ENCODE measurements at regions of chr1 and their contacts with region 1.

Region 1: GRCh38 chr1:179121159-179121938 is 39.5 kb downstream of the TOR3A start:
- DNase-seq: peak; percentile 83
- H3K4me3 Mint-ChIP-seq: no peak overlapping the region
- H3K27ac Mint-ChIP-seq: no peak overlapping the region
- H3K4me1 Mint-ChIP-seq: peaks cover 6% of the 10 kb centered on the region
- H3K27me3 Mint-ChIP-seq: no peaks in the 10 kb centered on the region

Region 2: GRCh38 chr1:179194068-179194537 is 72.8 kb after region 1 on chr1:
- intact Hi-C with region 1: loop called (anchors 1 kb)
- DNase-seq: no peak
- H3K4me3 Mint-ChIP-seq: no peak overlapping the region
- H3K27ac Mint-ChIP-seq: no peak overlapping the region
- H3K4me1 Mint-ChIP-seq: peaks cover 16% of the 10 kb centered on the region
- H3K27me3 Mint-ChIP-seq: no peaks in the 10 kb centered on the region

Region 3: DNA sequence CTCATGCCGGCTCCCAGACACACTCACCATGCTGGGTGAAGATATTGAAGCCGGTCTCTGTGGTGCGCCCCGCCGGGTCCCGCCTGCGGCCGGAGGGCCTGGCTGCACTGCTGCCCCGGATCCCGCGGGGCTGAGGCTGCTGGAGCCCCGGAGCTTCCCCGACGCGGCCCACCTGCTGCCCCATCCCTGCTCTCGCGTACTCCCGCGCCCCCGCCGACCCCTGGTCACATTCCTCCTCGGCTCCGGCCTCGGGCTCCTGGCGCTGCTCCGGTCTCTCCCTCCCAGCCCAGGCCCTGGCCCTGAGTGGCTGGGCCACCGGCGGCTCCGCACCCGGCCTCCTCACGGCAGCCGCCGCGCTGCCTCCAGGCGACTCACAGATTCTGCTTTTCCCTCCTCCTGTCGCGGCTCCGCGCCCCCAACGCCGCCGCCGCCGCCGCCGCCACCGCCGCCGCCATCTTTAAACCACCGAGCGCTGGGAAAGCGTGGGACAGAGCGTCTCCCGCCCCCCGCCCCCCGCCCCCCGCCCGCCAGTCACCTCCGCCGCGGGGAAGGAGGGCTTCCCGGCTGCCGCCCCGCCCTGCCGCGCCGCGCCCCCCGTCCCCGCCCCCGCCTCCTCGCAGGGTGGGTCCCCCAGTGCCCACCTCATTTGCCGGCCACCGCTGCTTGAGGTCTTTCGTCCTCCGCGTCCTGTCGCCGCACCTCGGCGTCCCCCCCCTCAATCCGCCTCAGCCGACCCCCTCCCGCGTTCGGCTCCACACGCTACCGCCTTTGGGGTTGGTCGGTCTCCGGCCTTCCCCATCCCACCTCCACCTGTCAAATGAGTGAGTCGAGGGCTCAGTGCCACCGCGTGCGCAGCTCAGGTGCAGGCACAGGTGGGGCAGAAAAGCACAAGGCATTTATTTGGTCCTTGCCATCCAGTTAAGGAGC is 108.1 kb after region 1 on chr1 and contains the start of gene ABL2:
- intact Hi-C with region 1: loop called (anchors 2 kb)
- DNase-seq: peak; percentile 88
- H3K4me3 Mint-ChIP-seq: peak within 1 kb of the TSS; percentile 90
- H3K27ac Mint-ChIP-seq: peak within 1 kb of the TSS; percentile 89
- H3K4me1 Mint-ChIP-seq: peaks cover 24% of the 10 kb centered on the region
- H3K27me3 Mint-ChIP-seq: peaks cover 4% of the 10 kb centered on the region
- total RNA-seq, gene ABL2: 9.9 and 11.1 TPM in 2 replicates

Region 4: GRCh38 chr1:179251675-179252074 is 130.3 kb after region 1 on chr1:
- intact Hi-C with region 1: no loop called
- DNase-seq: no peak
- H3K4me3 Mint-ChIP-seq: no peak overlapping the region
- H3K27ac Mint-ChIP-seq: no peak overlapping the region
- H3K4me1 Mint-ChIP-seq: no peaks in the 10 kb centered on the region
- H3K27me3 Mint-ChIP-seq: no peaks in the 10 kb centered on the region

Region 5: DNA sequence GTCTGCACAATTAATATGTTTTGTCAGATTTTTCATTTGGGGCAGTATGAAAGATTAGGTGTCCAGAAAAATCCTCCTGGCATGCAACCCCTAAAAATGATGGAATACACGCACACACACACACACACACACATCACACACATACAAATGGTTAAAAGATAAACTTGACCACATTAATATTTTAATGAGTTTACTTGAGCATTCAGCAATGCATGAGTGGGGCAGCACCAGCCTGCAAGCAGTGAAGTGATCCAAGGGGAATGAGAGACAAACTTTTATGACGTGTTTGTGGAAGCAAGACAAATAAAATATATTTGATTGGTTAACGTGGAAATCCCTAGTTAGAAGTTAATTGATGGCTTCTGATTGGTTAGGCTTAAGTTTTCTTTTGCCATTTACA is 143.2 kb after region 1 on chr1:
- intact Hi-C with region 1: no loop called
- DNase-seq: no peak
- H3K4me3 Mint-ChIP-seq: no peak overlapping the region
- H3K27ac Mint-ChIP-seq: no peak overlapping the region
- H3K4me1 Mint-ChIP-seq: no peaks in the 10 kb centered on the region
- H3K27me3 Mint-ChIP-seq: no peaks in the 10 kb centered on the region